ENCODE measurements at regions of chr15 and their contacts with region 1.

Region 1: DNA sequence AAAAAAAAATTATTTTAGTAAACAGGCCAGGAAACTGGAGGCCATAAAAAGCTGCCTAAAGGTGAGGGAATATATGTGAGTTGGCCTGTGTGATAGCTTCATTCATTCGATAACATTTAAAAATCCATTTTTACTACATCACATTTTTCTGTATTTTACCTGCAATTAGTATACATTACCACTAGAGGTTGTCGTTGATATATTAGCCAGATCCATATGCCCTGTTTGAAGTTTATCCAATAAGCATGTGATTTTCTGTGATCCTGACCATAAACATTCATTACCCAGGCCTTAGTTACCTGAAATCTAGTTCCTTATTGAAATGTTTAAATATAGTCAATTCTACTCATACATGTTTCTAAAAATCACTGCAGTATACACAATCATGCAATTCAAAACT is 71.4 kb downstream of the ARNT2 start:
- DNase-seq: no peak
- ATAC-seq: no peak
- H3K4me3 ChIP-seq: no peak overlapping the region
- H3K27ac ChIP-seq: no peak overlapping the region
- H3K4me1 ChIP-seq: no peaks in the 10 kb centered on the region
- H3K27me3 ChIP-seq: no peaks in the 10 kb centered on the region

Region 2: DNA sequence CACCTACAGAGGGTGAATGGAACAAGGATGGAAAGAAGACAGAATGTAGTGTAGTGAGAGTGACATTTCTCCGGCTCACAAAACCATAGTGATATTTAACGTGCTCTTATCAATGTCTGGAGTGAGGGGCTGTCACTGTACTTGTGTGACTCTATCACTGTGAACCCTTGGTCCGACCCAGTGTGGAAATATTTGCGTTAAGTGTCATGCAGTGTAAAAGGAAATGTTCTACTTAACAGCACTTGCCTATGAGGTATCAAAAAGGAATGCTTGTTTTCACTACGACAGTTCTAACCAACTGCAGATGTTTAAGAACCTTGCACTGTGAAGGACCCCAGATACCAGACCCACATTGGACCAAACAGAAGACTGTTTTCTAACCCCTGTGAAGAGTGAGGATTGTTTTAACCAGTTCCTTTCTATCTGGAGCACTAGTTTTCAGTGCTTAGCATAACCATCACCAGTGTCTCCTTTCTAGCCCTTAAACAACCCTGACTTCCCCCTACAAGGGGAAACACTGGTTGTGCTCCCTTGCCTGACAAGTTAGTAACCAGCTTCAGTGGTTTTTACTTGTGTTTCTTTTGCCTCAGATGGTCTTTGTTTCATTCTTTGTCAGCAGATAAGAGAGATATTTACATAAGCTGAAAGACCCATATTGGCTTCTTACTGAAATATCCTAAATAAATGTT is 74.8 kb after region 1 on chr15:
- intact Hi-C with region 1: loop called in 1 of 2 experiments (anchors 5 kb)
- DNase-seq: no peak
- ATAC-seq: no peak
- H3K4me3 ChIP-seq: no peak overlapping the region
- H3K27ac ChIP-seq: no peak overlapping the region
- H3K4me1 ChIP-seq: peaks cover 0 to 5% of the 10 kb centered on the region in 2 donors
- H3K27me3 ChIP-seq: no peaks in the 10 kb centered on the region

Measured in aorta (tissue), 5 donors.